Esophagus squamous epithelium (tissue), 5 donors: ENCODE measurements at regions of chr16 and their contacts with region 1.

Region 1: DNA sequence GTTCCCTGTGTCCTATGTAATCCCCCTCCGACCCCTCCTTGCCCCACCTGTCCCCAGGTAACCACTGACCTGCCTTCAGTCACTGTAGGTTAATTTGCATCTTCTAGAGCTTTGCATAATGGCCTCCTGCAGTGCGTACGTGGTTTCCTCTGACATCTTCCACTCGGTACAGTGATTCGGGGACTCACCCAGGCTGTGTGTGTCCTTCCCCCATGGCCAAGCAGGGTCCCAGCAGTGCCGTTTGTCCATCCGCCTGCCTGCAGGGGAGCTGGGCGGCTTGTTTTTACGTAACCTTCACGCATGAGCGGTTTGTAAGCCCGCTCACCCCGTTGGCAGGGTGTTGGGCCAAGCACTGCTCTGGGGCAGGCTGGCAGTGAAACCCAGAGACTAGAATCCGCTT is 7.9 kb downstream of the MAPK8IP3 start:
- DNase-seq: peak; percentile 17
- H3K4me3 ChIP-seq: no peak overlapping the region
- H3K27ac ChIP-seq: peak overlapping the region in 1 of 4 donors; percentile 3
- H3K4me1 ChIP-seq: peaks cover 3 to 45% (median 5%) of the 10 kb centered on the region in 3 donors
- H3K27me3 ChIP-seq: no peaks in the 10 kb centered on the region
- CTCF ChIP-seq: no peak
- POLR2A ChIP-seq: no peak

Region 2: DNA sequence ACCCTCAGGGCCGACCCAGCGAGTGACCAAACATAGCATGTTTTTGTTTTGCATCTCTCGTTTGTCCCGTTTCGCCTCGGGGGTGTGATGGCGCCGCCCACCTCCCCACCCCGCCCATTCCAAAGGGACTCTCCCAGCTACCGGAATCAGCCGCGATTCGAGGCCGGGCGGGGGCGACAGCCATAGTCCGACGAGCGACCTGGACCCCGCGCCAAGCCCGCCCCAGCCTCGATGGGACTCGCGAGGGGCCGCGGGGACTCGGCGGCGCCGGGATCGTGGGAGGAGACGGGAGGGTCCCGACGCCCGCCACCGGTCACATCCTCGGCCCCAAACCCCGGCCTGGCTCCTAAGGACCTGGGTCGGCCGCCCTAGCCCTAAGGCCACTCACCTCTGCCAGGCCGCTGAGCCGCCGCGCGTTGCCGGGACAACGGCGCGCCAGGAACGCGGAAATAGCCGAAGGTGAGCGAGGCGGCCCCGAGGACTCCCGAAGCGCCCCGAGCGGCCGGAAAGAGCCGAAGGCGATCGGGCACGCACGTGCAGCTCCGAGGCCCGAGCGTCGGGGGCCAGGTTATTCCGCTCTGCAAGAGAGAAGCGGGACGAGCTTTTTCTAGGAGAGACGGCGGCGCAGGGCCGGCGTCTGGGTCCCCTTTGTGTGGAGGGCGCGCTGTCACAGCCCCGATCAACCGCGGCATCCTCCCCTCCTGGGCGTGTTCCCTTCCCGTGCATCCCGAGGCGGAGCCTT is 103.5 kb before region 1 on chr16:
- intact Hi-C with region 1: loop called (anchors 10 kb)
- DNase-seq: no peak
- H3K4me3 ChIP-seq: peak overlapping the region; percentile 62 to 98 (median 88)
- H3K27ac ChIP-seq: peak overlapping the region; percentile 81 to 92 (median 86)
- H3K4me1 ChIP-seq: peaks cover 29 to 48% (median 34%) of the 10 kb centered on the region in 3 donors
- H3K27me3 ChIP-seq: no peaks in the 10 kb centered on the region
- CTCF ChIP-seq: peak in 1 of 6 experiments; percentile 5
- POLR2A ChIP-seq: no peak

Region 3: GRCh38 chr16:1942810-1943726 is 229.1 kb after region 1 on chr16 and contains the start of gene MSRB1:
- intact Hi-C with region 1: no loop called
- DNase-seq: peak; percentile 95
- H3K4me3 ChIP-seq: peak within 1 kb of the TSS; percentile 76 to 90 (median 86)
- H3K27ac ChIP-seq: peak within 1 kb of the TSS; percentile 85 to 96 (median 91)
- H3K4me1 ChIP-seq: peaks cover 13 to 35% (median 17%) of the 10 kb centered on the region in 3 donors
- H3K27me3 ChIP-seq: no peaks in the 10 kb centered on the region
- CTCF ChIP-seq: peak in 1 of 6 experiments; percentile 10
- POLR2A ChIP-seq: peak in 3 of 4 donors; percentile 90 to 95 (median 94)
- total RNA-seq, gene MSRB1: 20.1 to 36.4 (median 21.0) TPM